Ascending aorta (tissue), 2 donors: ENCODE measurements at regions of chr20 and their contacts with region 1.

Region 1: DNA sequence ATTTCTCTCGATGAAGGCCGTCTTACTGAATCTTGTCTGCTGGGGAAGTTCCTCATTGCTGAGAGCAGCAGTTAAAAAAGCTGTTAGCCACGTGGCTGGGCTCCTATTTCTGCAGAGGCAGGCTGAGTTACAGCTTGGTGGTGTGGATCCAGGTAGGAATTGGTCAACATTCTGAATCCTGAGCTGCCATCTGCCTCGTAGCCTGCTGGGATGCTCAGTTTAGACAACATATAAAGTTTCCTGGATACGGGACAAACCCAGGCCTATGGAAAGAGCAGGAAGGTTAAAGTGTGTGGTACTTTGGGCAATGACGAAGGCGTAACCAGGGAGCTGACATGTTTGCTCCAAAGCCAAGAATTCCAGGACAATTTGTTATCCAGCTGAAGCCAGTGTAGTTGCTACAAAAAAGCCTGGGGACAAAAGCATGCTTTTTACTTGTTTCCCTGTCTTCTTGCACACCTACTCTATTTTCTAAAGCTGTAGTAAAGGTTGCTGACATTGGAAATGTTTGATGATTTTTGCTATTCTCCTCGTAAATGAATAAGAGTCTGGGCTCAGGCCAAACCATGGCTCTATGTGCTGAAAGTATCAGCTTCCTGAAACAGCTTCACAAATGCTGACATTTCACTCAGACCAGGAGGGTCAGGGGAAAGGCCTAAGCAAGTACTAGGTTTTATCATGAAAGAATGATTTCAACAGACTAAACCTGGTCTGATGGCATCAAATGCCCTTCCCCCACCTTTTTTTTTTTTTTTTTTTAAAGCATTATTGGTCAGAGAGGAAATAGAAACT is 12.4 kb upstream of the MYLK2 start:
- DNase-seq: no peak
- H3K4me3 ChIP-seq: no peak overlapping the region
- H3K27ac ChIP-seq: peak overlapping the region; percentile 0 to 25
- H3K4me1 ChIP-seq: peaks cover 10 to 43% of the 10 kb centered on the region in 2 donors
- H3K27me3 ChIP-seq: no peaks in the 10 kb centered on the region
- CTCF ChIP-seq: no peak

Region 2: DNA sequence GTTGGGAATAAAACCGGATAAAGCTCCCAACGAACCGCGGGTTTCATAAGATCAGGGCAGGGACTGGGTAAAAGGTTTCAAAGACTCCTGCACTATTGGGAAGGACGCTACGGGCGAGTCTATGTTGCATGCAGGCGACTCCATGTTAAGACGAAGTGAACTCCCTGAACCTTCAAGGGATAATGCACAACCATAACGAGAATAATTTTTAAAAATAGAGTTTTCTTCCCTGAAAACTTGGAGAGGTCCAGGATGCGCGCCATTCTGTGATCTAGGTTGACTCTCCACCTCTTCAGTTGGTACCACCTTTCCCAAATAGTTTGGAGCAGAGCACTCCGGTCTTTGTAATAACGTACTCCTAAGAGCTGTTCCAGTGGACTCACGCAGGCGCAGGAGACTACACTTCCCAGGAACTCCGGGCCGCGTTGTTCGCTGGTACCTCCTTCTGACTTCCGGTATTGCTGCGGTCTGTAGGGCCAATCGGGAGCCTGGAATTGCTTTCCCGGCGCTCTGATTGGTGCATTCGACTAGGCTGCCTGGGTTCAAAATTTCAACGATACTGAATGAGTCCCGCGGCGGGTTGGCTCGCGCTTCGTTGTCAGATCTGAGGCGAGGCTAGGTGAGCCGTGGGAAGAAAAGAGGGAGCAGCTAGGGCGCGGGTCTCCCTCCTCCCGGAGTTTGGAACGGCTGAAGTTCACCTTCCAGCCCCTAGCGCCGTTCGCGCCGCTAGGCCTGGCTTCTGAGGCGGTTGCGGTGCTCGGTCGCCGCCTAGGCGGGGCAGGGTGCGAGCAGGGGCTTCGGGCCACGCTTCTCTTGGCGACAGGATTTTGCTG is 67.8 kb before region 1 on chr20 and contains the start of gene TPX2:
- intact Hi-C with region 1: loop called (anchors 2 kb)
- DNase-seq: peak; percentile 90 to 97
- H3K4me3 ChIP-seq: peak within 1 kb of the TSS; percentile 61 to 77
- H3K27ac ChIP-seq: peak within 1 kb of the TSS; percentile 50 to 64
- H3K4me1 ChIP-seq: peaks cover 0 to 3% of the 10 kb centered on the region in 2 donors
- H3K27me3 ChIP-seq: no peaks in the 10 kb centered on the region
- CTCF ChIP-seq: peak; percentile 13 to 23 (median 19)
- total RNA-seq, gene TPX2: not detected

Region 3: GRCh38 chr20:31760519-31761240 is 46.1 kb before region 1 on chr20:
- intact Hi-C with region 1: loop called (anchors 5 kb)
- DNase-seq: no peak
- H3K4me3 ChIP-seq: no peak overlapping the region
- H3K27ac ChIP-seq: no peak overlapping the region
- H3K4me1 ChIP-seq: no peaks in the 10 kb centered on the region
- H3K27me3 ChIP-seq: no peaks in the 10 kb centered on the region
- CTCF ChIP-seq: no peak

Region 4: GRCh38 chr20:31879143-31879987 is 72.6 kb after region 1 on chr20:
- intact Hi-C with region 1: no loop called
- DNase-seq: peak; percentile 87 to 98
- H3K4me3 ChIP-seq: peak overlapping the region; percentile 62 to 63
- H3K27ac ChIP-seq: peak overlapping the region; percentile 59 to 76
- H3K4me1 ChIP-seq: peaks cover 0 to 4% of the 10 kb centered on the region in 2 donors
- H3K27me3 ChIP-seq: no peaks in the 10 kb centered on the region
- CTCF ChIP-seq: peak in 1 of 3 experiments; percentile 16